Activated CD8-positive, alpha-beta T cell treated with anti-CD3 and anti-CD28 coated beads for 36 hours (primary cell): ENCODE measurements at regions of chr10 and their contacts with region 1.

Region 1: DNA sequence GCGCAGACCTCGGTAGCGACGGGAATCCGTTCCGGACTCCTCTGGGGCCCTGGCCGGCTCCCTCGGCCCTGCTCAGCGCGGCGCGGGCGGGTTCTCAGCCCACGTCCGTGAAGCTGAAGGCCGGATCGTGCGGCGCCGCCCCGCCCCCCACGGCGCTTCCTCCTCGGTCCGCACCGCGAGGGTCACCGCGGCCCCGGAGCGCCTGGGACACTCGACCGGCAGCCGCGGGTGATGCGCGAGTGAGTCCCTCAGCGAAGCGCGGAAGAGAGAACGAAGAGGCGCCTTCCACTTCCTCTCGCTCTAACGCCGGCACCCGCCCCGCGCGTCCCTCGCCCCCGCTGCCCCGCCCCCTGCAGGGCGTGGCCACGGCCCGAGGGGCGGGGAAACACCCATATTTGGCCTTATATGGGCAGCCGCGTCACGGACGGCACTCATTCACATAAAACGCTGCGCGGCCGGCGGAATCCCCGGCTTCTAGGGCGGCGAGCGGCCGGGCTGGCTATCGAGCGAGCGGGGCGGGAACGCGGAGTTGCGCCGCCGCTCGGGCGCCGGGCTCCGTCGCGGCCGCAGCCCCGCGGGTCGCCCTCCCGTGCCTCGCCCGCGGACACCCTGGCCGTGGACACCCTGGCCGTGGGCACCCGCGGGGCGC is at the start of gene DUSP5:
- DNase-seq: peak; percentile 96
- ATAC-seq: peak; percentile 84
- H3K4me3 Mint-ChIP-seq: peak within 1 kb of the TSS; percentile 99
- H3K27ac Mint-ChIP-seq: peak within 1 kb of the TSS; percentile 93
- H3K4me1 Mint-ChIP-seq: peaks cover 38% of the 10 kb centered on the region
- H3K27me3 Mint-ChIP-seq: peaks cover under 1% of the 10 kb centered on the region
- CTCF ChIP-seq: no peak
- total RNA-seq, gene DUSP5: 49.4 to 50.8 TPM

Region 2: GRCh38 chr10:110304780-110305421 is 192.7 kb before region 1 on chr10 and contains the start of gene SMNDC1:
- CTCF ChIA-PET with region 1: interaction called, 37 read pairs
- POLR2A ChIA-PET with region 1: no interaction called
- intact Hi-C with region 1: loop called (anchors 5 kb)
- DNase-seq: peak; percentile 98
- ATAC-seq: peak; percentile 93
- H3K4me3 Mint-ChIP-seq: peak within 1 kb of the TSS; percentile 93
- H3K27ac Mint-ChIP-seq: peak within 1 kb of the TSS; percentile 98
- H3K4me1 Mint-ChIP-seq: peaks cover 43% of the 10 kb centered on the region
- H3K27me3 Mint-ChIP-seq: no peaks in the 10 kb centered on the region
- CTCF ChIP-seq: no peak
- total RNA-seq, gene SMNDC1: 39.7 to 42.4 TPM

Region 3: DNA sequence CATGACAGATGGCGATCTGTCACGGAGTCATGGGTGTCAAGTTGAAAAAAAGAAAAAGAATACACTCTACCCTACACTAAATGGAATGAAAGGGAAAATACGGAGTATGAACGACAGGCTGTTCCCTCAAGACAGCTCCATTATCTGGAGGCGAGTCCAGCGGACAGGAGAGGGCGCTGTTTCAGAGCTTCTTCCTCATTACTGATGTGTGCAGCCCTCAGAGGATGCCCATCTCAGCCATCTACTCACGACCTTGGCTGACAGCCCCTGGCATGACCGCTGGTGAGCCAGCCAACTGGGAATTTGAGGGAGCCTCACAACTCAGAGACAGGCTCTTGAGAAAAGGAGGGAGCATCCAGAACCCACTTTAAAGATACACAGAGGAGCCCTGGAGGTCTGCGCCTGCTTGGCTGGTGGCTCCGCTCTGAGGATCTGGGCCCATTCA is 143.2 kb before region 1 on chr10:
- CTCF ChIA-PET with region 1: interaction called, 55 read pairs
- POLR2A ChIA-PET with region 1: interaction called, 47 read pairs
- intact Hi-C with region 1: loop called (anchors 2 kb)
- DNase-seq: peak; percentile 95
- ATAC-seq: peak; percentile 40
- H3K4me3 Mint-ChIP-seq: no peak overlapping the region
- H3K27ac Mint-ChIP-seq: peak overlapping the region; percentile 87
- H3K4me1 Mint-ChIP-seq: peaks cover 60% of the 10 kb centered on the region
- H3K27me3 Mint-ChIP-seq: peaks cover 2% of the 10 kb centered on the region
- CTCF ChIP-seq: peak; percentile 90

Region 4: GRCh38 chr10:110425684-110426293 is 71.8 kb before region 1 on chr10:
- CTCF ChIA-PET with region 1: interaction called, 3 read pairs
- POLR2A ChIA-PET with region 1: interaction called, 7 read pairs
- intact Hi-C with region 1: loop called (anchors 5 kb)
- DNase-seq: peak; percentile 91
- ATAC-seq: peak; percentile 89
- H3K4me3 Mint-ChIP-seq: peak overlapping the region; percentile 0
- H3K27ac Mint-ChIP-seq: peak overlapping the region; percentile 81
- H3K4me1 Mint-ChIP-seq: peaks cover 50% of the 10 kb centered on the region
- H3K27me3 Mint-ChIP-seq: no peaks in the 10 kb centered on the region
- CTCF ChIP-seq: no peak

Region 5: DNA sequence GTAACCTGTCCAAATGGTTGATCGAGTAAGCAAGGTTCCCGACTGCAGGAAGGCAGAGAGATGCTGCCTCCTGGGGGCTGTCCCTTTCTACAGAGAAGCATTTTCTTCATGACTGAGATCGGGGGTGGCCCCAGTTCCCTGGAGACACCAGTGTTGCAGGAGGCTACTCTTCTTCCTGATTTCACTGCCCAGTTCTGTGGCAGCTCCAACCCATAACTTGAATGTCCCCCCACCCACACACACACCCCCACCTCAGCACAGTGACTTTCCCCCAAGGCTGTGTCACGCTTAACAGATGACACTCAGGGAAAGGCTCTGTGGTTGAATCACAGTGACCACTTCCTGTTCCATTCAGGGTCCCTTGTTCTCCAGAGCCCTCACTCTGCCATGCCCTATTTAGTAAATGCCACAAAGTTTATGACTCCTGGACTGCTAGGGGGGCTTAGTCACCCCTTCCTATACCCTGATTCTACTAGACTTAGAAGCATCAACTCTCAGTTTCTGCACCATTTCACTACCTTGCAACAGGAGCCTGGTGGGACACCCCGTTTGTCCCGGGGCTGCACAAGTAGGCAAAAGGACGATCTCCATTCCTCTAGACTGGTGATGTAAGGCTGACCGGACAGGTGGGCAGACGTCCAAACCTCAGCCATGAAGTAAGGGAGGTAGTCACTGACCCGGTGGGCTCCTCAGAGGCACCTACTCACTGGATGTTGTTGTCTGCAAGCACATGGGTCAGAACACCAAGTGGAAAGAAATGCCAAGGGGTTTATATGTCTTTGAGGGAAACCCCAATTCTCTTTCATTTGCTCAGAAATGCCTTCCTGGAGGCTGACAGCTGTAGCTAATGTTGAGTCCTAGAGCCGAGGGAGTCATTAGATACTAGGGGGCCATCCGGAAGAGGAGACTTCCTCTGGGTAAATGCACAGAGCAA is 38.7 kb after region 1 on chr10:
- CTCF ChIA-PET with region 1: interaction called, 14 read pairs
- POLR2A ChIA-PET with region 1: interaction called, 5 read pairs
- intact Hi-C with region 1: loop called (anchors 2 kb)
- DNase-seq: peak; percentile 95
- ATAC-seq: peak; percentile 92
- H3K4me3 Mint-ChIP-seq: peak overlapping the region; percentile 24
- H3K27ac Mint-ChIP-seq: peak overlapping the region; percentile 90
- H3K4me1 Mint-ChIP-seq: peaks cover 46% of the 10 kb centered on the region
- H3K27me3 Mint-ChIP-seq: no peaks in the 10 kb centered on the region
- CTCF ChIP-seq: no peak